RWPE1 (cell line): ENCODE measurements at regions of chr14 and their contacts with region 1.

Region 1: GRCh38 chr14:73472185-73473114 is 14.1 kb upstream of the NUMB start:
- DNase-seq: peak; percentile 65
- H3K27ac ChIP-seq: no peak overlapping the region
- CTCF ChIP-seq: peak; percentile 75

Region 2: DNA sequence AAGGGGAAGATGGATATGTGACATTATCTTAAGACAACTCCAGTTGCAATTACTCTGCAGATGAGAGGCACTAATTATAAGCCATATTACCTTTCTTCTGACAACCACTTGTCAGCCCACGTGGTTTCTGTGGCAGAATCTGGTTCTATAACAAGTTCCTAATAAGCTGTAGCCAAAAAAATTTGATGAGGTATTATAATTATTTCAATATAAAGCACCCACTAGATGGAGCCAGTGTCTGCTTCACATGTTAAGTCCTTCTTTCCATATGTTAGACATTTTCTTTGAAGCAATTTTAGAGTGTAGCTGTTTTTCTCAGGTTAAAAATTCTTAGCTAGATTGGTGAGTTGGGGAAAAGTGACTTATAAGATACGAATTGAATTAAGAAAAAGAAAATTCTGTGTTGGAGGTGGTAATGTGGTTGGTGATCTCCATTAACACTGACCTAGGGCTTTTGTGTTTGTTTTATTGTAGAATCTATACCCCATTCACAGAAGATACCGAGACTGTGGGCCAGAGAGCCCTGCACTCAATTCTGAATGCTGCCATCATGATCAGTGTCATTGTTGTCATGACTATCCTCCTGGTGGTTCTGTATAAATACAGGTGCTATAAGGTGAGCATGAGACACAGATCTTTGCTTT is 299.2 kb before region 1 on chr14:
- CTCF ChIA-PET with region 1: interaction called, 21 read pairs
- POLR2A ChIA-PET with region 1: no interaction called
- DNase-seq: peak; percentile 27
- H3K27ac ChIP-seq: no peak overlapping the region
- CTCF ChIP-seq: peak; percentile 65

Region 3: DNA sequence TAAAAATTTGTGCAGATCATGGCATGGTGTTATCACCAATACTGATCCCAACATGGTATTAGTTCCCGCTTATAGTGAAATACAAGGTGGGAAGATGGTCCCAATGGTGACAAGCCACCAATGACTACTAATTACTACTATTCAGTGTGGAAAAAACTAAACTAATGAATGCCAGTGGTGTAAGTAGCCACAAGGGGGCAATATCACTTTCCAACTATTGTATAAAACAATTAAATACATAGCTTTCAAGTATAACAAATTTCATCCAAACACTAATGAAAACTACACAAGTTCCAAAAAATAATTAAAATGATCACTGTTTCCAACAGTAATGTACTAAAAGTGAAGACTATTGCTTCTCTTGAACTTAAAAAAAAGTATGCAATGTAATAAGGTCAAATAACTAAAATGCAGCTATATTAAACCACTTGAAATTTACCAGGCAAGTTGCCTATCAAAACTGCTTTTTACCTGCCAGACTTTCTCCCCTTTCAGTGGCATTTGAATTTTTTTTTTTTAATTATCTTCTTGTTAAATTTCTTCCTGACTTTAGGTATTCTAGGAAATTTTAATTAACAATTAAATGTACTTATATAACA is 177.2 kb before region 1 on chr14:
- CTCF ChIA-PET with region 1: interaction called, 26 read pairs
- POLR2A ChIA-PET with region 1: no interaction called
- DNase-seq: peak; percentile 41
- H3K27ac ChIP-seq: no peak overlapping the region
- CTCF ChIP-seq: peak; percentile 77

Region 4: DNA sequence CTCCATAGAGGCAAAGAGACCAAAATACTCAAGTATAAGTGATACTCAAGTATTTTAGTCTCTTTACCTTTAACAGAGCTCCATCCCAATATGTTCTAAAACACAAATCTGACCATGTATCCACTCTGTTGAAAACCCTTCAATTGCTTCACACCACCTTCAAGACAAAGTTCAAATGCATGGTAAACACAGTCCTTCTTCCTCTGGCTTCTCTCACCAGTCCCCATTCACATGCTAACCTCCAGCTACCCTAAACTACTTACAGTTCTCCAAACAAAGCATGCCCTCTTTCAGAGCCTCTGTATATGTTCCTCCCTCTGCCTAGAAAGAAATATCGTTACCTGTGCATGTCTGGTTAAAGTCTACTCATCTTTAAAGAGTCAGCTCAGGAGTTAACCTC is 114.3 kb before region 1 on chr14:
- CTCF ChIA-PET with region 1: interaction called, 10 read pairs
- POLR2A ChIA-PET with region 1: no interaction called
- DNase-seq: no peak
- H3K27ac ChIP-seq: no peak overlapping the region
- CTCF ChIP-seq: no peak

Region 5: DNA sequence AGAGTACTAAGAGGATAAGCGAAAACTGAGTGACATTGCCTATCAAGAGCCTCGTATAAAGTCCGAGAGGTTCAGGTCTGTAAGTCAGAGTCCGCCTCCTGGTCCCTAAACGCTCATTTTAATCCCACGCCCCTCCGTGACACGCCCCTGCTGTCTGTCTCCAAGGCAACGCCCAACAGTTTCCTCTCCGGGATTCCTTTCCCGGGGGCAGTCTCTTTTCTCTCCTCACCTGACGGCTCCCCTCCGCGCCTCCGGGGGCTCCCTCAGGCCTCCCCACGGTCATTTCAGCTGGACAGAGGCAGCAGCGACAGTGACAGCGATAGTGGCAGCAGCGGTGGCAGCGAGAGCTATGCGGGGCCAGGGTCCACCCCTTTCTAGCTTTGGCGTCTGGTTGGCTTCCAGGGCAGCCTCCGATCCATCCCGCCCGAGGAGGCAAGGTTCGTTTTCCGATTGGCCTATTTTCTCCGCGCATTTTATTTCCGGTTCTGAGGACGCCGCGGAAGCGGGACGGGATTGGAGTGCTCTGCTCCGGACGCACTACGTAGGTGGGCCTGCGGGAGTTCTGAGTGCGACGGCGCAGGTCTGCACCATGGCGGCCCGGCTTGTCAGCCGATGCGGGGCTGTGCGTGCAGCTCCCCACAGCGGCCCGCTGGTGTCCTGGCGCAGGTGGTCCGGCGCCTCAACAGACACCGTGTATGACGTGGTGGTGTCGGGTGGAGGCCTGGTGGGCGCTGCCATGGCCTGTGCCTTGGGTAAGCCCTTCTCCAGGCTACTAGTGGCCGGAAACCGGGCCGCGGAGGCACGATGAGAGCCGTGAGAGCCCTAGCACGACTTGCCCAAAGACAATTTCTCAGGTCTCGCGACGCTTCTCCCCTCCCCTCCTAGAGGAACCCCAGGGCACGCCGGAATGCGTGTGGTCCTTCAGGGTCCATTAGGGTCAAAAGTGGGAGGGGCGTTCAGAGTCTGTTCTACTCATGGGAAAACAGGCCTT is 477.6 kb after region 1 on chr14 and contains the starts of genes COQ6 and FAM161B:
- CTCF ChIA-PET with region 1: no interaction called
- POLR2A ChIA-PET with region 1: no interaction called
- DNase-seq: peak; percentile 92
- H3K27ac ChIP-seq: peak within 1 kb of the TSS; percentile 91
- CTCF ChIP-seq: no peak